ENCODE measurements at regions of chr10 and their contacts with region 1.

Region 1: GRCh38 chr10:15419279-15419874 is 48.3 kb upstream of the FAM171A1 start:
- DNase-seq: peak in 1 of 2 donors; percentile 29
- ATAC-seq: peak in 3 of 8 donors; percentile 41 to 65 (median 53)
- H3K4me3 ChIP-seq: no peak overlapping the region
- H3K27ac ChIP-seq: no peak overlapping the region
- H3K4me1 ChIP-seq: no peaks in the 10 kb centered on the region
- H3K27me3 ChIP-seq: no peaks in the 10 kb centered on the region
- CTCF ChIP-seq: peak; percentile 67 to 89 (median 84)

Region 2: GRCh38 chr10:14878266-14879054 is 540.9 kb before region 1 on chr10 and contains the start of gene SUV39H2:
- intact Hi-C with region 1: no loop called
- DNase-seq: peak; percentile 94 to 97
- ATAC-seq: peak; percentile 94 to 99 (median 96)
- H3K4me3 ChIP-seq: peak within 1 kb of the TSS; percentile 68 to 96 (median 85)
- H3K27ac ChIP-seq: peak within 1 kb of the TSS; percentile 82 to 99 (median 96)
- H3K4me1 ChIP-seq: peaks cover 0 to 45% (median 30%) of the 10 kb centered on the region in 9 donors
- H3K27me3 ChIP-seq: no peaks in the 10 kb centered on the region
- CTCF ChIP-seq: peak in 3 of 9 donors; percentile 20 to 40 (median 37)
- total RNA-seq, gene SUV39H2: 4.3 to 9.1 (median 7.4) TPM

Region 3: DNA sequence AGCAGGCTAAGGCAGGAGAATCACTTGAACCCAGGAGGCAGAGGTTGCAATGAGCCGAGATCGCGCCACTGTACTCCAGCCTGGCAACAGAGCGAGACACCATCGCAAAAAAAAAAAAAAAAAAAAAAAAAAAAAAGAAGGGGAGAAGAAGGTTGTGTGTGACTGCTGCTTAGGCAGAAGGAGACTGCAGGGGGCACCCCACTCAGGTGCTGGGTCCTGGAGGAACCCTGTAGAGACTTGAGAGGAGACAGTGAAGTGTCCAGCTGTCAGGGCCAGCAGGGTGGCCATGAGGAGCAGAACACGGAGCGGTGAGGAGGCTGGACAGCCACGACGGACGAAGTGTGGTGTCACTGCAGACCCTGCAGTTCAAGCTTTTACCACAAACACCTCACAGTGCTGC is 151.9 kb before region 1 on chr10:
- intact Hi-C with region 1: loop called in 1 of 10 experiments (anchors 5 kb)
- DNase-seq: no peak
- ATAC-seq: peak in 1 of 8 donors; percentile 10
- H3K4me3 ChIP-seq: no peak overlapping the region
- H3K27ac ChIP-seq: no peak overlapping the region
- H3K4me1 ChIP-seq: peaks cover 0 to 3% (median 0%) of the 10 kb centered on the region in 9 donors
- H3K27me3 ChIP-seq: no peaks in the 10 kb centered on the region
- CTCF ChIP-seq: no peak

Region 4: DNA sequence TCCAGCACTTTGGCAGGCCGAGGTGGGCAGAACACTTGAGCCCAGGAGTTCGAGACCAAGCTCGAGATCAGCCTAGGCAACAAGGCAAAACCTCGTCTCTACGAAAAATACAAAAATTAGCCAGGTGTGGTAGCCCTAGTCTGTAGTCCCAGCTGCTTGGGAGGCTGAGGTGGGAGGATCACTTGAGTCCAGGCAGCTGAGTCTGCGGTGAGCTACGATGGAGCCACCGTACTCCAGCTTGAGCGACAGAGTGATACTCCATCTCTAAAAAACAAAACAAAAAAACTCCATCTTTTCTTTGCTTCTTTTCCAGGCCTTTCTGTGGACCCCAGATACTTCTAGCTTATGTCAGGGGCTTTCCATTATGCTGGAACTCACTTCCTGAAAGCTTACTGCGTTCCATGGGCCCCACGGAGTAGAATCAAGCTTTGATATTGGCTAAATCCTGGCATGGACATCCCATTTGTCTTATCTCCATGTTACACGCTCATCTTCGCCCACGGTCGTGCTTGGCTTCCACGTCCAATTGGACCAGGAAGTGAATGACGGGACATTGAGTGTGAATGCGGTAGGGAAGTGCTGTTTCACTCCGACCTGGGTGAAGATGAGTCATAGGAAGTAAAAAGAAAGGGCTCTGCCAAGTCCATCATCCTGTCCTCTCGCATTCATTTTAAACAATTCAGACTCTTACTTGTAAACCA is 94.0 kb before region 1 on chr10:
- intact Hi-C with region 1: no loop called
- DNase-seq: peak in 1 of 2 donors; percentile 38
- ATAC-seq: peak in 7 of 8 donors; percentile 31 to 78 (median 59)
- H3K4me3 ChIP-seq: no peak overlapping the region
- H3K27ac ChIP-seq: peak overlapping the region in 6 of 10 donors; percentile 10 to 59 (median 43)
- H3K4me1 ChIP-seq: peaks cover 0 to 34% (median 14%) of the 10 kb centered on the region in 9 donors
- H3K27me3 ChIP-seq: no peaks in the 10 kb centered on the region
- CTCF ChIP-seq: no peak